Dendritic cell treated with granulocyte-macrophage colony-stimulating factor and Interleukin-4, amounts not matched to agents 40 ng/mL and 50 ng/mL, for 4 days (primary cell): ENCODE measurements at regions of chr15 and their contacts with region 1.

Region 1: DNA sequence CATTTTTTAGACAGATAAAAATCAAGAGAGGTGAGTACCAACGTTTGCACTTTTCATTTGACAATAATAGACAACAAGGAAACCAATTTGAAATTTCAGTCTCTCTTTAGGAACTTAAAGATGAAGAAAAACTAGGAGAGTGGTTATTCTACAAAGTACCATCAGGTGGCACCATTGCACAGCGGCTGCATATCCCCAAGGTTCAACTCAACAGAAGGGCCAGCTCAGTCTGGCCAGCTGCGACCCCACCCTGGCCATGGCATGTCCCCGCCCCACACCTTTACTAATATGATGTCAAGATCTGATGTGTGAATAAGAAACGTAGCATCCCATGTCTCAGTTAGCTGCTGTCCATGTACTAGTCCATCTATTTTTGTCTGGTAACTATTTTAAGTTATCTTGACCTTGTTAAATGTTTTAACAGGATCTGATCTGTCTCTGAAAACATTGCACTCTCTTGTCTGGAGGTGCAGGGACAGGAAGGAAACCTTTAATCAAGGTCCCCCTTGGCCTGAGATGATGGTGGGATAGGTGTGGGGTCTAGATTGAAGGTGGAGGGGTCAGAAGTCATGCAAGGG is 35.5 kb upstream of the CGNL1 start:
- H3K4me3 Mint-ChIP-seq: no peak overlapping the region
- H3K27ac Mint-ChIP-seq: no peak overlapping the region
- H3K4me1 Mint-ChIP-seq: peaks cover 13% of the 10 kb centered on the region
- H3K27me3 Mint-ChIP-seq: peaks cover 6% of the 10 kb centered on the region

Region 2: DNA sequence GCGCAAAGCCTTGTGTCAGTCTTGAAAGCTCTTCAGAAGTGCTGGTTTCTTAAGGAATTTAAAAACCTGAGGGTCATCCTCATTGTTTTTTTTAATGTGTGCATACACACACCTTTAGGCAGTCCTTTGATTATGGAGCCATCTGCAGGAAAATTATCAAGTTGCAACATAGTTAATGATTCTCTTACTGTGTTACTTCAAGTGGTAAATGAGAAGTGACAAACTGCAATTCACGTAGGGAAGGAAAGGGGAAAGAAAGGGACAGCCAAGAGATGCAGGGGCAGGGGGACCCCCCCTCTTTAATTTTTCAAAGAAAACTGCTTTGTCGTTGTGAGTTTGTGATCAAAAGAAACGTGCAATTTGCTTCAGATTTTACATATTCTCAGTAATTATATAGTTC is 126.9 kb before region 1 on chr15:
- intact Hi-C with region 1: no loop called
- H3K4me3 Mint-ChIP-seq: no peak overlapping the region
- H3K27ac Mint-ChIP-seq: no peak overlapping the region
- H3K4me1 Mint-ChIP-seq: peaks cover 15% of the 10 kb centered on the region
- H3K27me3 Mint-ChIP-seq: no peaks in the 10 kb centered on the region

Region 3: DNA sequence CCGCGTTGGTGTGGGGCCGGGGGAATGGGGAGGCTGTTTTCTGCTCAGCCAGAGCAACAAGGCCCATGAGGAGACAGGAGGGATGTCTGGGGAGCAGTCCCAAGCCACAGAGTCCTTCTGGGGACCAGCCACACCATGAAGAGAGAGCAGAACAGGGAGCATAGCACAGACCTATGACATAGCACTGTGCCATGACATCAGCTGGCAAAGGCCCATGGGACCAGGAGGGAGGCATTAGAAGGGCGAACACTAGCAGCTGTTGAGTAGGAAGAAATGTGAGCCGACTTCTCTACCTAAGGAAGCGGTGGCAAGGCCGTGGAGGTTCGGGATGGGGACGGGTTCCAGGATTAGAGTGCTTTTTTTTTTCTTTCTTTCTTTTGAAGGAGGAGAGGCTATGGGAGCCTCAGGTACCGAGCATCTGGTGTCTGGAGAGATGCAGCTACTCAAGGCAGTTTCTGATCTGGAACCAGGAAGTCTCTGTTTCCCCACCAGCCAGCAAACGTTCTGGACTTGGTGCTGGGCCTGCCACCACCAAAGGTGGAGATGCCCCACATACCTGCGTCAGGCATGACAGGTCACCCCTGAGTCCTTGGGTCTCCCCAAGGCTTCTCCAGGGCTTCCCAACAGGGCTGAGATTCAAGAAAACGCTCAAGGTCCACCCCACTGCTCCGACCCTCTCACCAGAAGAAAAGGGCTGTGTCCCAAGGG is 41.8 kb before region 1 on chr15:
- intact Hi-C with region 1: no loop called
- H3K4me3 Mint-ChIP-seq: no peak overlapping the region
- H3K27ac Mint-ChIP-seq: peak overlapping the region; percentile 88
- H3K4me1 Mint-ChIP-seq: peaks cover 78% of the 10 kb centered on the region
- H3K27me3 Mint-ChIP-seq: no peaks in the 10 kb centered on the region

Region 4: DNA sequence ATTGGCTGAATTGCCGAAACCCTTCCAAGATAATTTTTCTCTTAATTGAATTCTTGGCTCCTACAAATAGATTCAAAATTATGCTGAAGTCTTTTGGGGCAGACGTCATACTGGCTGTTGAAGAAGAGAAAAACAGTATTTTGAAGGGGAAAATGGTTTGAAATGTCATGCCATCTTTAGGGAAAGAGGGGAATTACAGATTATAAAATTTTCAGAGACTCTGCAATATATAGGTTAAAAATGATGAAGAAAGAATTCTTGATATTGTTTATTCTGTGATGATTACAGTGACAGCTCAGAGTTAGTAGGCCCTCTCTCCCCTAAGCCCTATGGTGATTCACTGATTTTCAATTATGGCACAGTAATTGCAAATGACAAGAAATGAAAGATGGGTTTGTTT is 121.6 kb after region 1 on chr15:
- intact Hi-C with region 1: loop called (anchors 5 kb)
- H3K4me3 Mint-ChIP-seq: no peak overlapping the region
- H3K27ac Mint-ChIP-seq: no peak overlapping the region
- H3K4me1 Mint-ChIP-seq: no peaks in the 10 kb centered on the region
- H3K27me3 Mint-ChIP-seq: peaks cover 1% of the 10 kb centered on the region

Region 5: GRCh38 chr15:57527382-57528091 is 186.8 kb after region 1 on chr15:
- intact Hi-C with region 1: loop called (anchors 1 kb)
- H3K4me3 Mint-ChIP-seq: no peak overlapping the region
- H3K27ac Mint-ChIP-seq: no peak overlapping the region
- H3K4me1 Mint-ChIP-seq: no peaks in the 10 kb centered on the region
- H3K27me3 Mint-ChIP-seq: no peaks in the 10 kb centered on the region

Region 6: GRCh38 chr15:57541805-57542504 is 201.2 kb after region 1 on chr15:
- intact Hi-C with region 1: loop called (anchors 5 kb)
- H3K4me3 Mint-ChIP-seq: no peak overlapping the region
- H3K27ac Mint-ChIP-seq: no peak overlapping the region
- H3K4me1 Mint-ChIP-seq: no peaks in the 10 kb centered on the region
- H3K27me3 Mint-ChIP-seq: peaks cover 1% of the 10 kb centered on the region